ENCODE measurements at regions of chr20 and their contacts with region 1.

Region 1: DNA sequence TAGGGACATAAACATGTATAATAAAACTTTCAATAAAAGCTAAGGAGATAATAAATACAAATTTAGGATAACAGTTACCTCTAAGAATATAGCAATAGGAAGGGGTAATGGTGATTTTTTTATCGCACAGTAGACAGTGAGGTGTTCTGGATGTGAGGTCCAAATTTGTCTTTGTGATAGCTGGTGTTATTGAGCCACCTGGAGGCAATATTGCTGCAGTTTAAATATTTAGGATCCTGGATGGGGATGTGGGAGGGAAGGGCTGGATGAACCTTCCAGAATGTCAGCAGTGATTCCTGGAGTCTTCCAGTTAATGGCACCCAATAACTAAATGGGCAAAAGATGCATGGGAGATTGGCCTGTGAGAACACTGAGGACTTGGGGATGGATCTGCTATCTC is 13.9 kb downstream of the DEFB123 start:
- DNase-seq: no peak
- H3K4me3 ChIP-seq: no peak overlapping the region
- H3K27ac ChIP-seq: no peak overlapping the region
- H3K27me3 ChIP-seq: peaks cover 2% of the 10 kb centered on the region
- CTCF ChIP-seq: no peak

Region 2: DNA sequence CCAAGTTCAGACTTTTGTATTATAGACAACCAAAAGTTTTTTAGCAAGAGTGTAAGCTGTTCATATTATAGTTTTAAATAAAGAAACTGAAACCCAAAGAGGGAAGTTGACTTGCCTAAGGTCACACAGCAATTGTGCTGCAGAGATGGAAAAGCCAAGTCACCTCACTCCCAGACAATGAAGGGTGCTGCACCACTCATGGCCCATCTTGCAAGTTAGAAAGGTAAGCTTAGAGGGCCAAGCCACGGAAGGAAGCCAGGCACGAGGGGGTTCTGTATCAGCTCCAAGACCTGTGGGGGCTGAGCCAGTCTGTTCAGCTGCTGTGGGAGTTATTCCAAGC is 19.7 kb after region 1 on chr20:
- CTCF ChIA-PET with region 1: interaction called, 11 read pairs
- POLR2A ChIA-PET with region 1: no interaction called
- DNase-seq: no peak
- H3K4me3 ChIP-seq: no peak overlapping the region
- H3K27ac ChIP-seq: no peak overlapping the region
- H3K27me3 ChIP-seq: peaks cover 31% of the 10 kb centered on the region
- CTCF ChIP-seq: no peak

Region 3: GRCh38 chr20:31485450-31486339 is 31.3 kb after region 1 on chr20:
- CTCF ChIA-PET with region 1: interaction called, 31 read pairs
- POLR2A ChIA-PET with region 1: no interaction called
- DNase-seq: no peak
- H3K4me3 ChIP-seq: peak overlapping the region; percentile 34
- H3K27ac ChIP-seq: no peak overlapping the region
- H3K27me3 ChIP-seq: peaks cover 3% of the 10 kb centered on the region
- CTCF ChIP-seq: no peak

Region 4: DNA sequence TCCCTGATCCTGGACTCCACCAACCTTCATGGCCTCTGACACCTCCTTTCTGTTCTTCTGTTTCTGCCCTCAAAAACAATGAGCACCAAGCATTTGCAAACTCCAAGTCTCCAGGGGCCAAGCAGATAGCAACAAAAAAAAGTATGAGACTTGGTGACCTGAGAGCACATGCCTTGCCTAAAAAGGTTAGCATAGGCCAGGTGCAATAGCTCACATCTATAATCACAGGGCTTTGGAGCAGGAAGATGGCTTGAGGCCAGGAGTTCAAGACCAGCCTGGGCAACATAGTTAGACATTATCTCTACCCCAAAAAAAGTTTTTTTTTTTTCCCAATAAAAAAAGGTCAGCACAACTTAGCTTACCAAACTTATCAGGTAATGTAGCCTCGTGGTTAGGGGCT is 46.2 kb after region 1 on chr20:
- CTCF ChIA-PET with region 1: interaction called, 210 read pairs
- POLR2A ChIA-PET with region 1: no interaction called
- DNase-seq: no peak
- H3K4me3 ChIP-seq: no peak overlapping the region
- H3K27ac ChIP-seq: no peak overlapping the region
- H3K27me3 ChIP-seq: peaks cover 11% of the 10 kb centered on the region
- CTCF ChIP-seq: no peak

Region 5: DNA sequence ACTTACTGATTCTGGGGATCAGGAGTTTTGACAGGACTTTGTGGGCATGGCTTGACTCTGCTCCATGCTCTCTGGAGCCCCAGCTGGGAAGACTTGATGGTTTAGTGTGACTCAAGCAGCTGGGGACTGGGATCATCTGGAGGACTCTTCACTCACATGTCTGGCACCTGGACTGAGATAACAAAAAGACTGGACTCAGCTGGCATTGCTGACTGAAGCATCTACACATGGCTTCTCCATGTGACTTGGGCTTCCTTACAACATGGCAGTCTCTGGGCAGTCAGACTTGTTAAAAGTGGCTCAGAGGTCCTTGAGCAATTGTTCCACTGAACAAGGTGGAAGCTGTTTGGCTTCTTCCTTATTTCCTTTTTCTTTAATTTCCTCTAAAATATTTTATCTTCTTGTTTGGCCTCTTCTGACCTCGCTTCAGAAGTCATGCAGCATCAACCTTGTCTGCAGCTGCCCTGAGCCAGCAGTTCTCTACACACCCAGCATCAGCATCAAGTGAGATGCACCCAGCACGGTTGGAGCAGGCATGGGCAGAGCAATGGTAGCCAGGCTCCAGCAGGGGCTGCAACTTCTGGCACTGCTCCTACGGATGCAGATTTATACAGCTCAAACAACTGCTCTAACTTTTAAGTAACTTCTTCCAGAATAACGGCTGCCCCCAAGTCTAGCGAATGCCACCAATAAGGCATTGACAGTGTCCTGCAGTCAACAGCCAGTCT is 54.3 kb after region 1 on chr20:
- CTCF ChIA-PET with region 1: interaction called, 210 read pairs
- POLR2A ChIA-PET with region 1: no interaction called
- DNase-seq: no peak
- H3K4me3 ChIP-seq: no peak overlapping the region
- H3K27ac ChIP-seq: no peak overlapping the region
- H3K27me3 ChIP-seq: peaks cover 10% of the 10 kb centered on the region
- CTCF ChIP-seq: no peak; the same call in 1 of the 2 replicates